ENCODE measurements at regions of chr17 and their contacts with region 1.

Region 1: GRCh38 chr17:44400226-44400847 is 10.9 kb upstream of the ITGA2B start:
- DNase-seq: peak; percentile 7
- H3K4me3 ChIP-seq: no peak overlapping the region
- H3K27ac ChIP-seq: no peak overlapping the region
- H3K27me3 ChIP-seq: no peaks in the 10 kb centered on the region
- CTCF ChIP-seq: peak; percentile 64

Region 2: GRCh38 chr17:44385287-44386181 is 14.8 kb before region 1 on chr17:
- CTCF ChIA-PET with region 1: interaction called, 12 read pairs
- POLR2A ChIA-PET with region 1: no interaction called
- DNase-seq: peak; percentile 13
- H3K4me3 ChIP-seq: peak overlapping the region; percentile 65
- H3K27ac ChIP-seq: no peak overlapping the region
- H3K27me3 ChIP-seq: peaks cover 30% of the 10 kb centered on the region
- CTCF ChIP-seq: peak; percentile 34; the same call in 1 of the 2 replicates